ENCODE measurements at regions of chr12 and their contacts with region 1.

Region 1: DNA sequence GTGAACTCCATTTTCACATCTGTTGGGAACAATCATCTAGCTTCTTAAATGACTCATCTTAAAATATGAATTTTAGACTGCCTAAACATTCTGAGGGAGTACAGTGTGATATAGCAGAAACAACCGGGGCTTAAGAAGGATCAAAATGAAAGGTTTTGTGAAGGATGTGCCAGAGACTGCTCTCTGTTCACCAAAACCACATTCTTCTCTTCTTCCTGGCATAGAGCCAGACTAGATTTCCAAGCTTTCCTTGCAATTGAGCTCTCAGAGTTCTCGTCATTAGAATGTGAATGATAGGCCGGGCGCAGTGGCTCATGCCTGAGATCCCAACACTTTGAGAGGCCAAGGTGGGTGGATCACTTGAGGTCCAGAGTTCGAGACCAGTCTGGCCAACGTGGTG is 94.5 kb downstream of the LRRIQ1 start:
- DNase-seq: no peak
- H3K4me3 ChIP-seq: no peak overlapping the region
- H3K27ac ChIP-seq: no peak overlapping the region
- H3K4me1 ChIP-seq: no peaks in the 10 kb centered on the region
- H3K27me3 ChIP-seq: no peaks in the 10 kb centered on the region
- CTCF ChIP-seq: no peak

Region 2: DNA sequence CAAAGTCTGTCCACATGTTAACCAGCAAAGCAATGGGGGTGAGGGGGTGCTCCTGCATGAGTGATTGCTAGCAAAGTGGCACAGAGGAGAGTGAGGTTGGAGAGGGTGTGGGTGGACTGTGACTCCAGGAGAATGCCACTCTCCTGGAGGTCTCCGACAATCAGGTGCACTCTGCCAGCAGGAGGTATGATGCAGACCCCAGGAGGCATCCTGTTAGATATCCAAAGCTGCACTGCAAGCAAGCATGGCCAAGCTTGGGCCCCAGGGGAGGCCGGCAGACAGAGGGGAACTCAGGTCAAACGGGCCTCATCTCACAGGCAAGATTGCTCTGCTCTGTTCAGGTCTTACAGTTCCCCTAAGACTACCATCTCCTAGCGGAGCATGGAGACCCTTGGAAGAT is 75.9 kb after region 1 on chr12:
- CTCF ChIA-PET with region 1: no interaction called
- dilution Hi-C with region 1: loop called (anchors 5 kb)
- in situ Hi-C with region 1: no loop called
- intact Hi-C with region 1: no loop called
- DNase-seq: no peak
- H3K4me3 ChIP-seq: no peak overlapping the region
- H3K27ac ChIP-seq: no peak overlapping the region
- H3K4me1 ChIP-seq: no peaks in the 10 kb centered on the region
- H3K27me3 ChIP-seq: no peaks in the 10 kb centered on the region
- CTCF ChIP-seq: no peak

Region 3: DNA sequence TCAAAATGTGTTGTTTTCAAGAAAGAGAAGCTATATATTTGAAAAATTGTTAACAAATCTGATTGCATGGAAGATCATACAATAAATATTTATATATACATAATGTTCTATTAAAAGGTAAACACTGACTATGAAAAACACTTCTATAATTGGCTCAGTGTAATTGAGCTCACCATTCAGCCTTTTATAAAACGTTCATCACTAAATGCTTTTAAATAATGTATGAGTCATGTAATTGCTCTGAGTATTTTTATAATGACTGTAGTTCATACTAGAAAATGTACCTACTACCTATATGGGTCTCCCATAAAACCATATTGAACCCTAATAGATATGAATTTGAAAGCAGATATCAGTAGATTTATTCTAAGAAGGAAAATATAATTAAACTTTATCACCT is 1366.0 kb after region 1 on chr12:
- CTCF ChIA-PET with region 1: no interaction called
- dilution Hi-C with region 1: no loop called
- in situ Hi-C with region 1: no loop called
- intact Hi-C with region 1: no loop called
- DNase-seq: no peak
- H3K4me3 ChIP-seq: no peak overlapping the region
- H3K27ac ChIP-seq: no peak overlapping the region
- H3K4me1 ChIP-seq: no peaks in the 10 kb centered on the region
- H3K27me3 ChIP-seq: no peaks in the 10 kb centered on the region
- CTCF ChIP-seq: no peak